ENCODE measurements at regions of chr7 and their contacts with region 1.

Region 1: DNA sequence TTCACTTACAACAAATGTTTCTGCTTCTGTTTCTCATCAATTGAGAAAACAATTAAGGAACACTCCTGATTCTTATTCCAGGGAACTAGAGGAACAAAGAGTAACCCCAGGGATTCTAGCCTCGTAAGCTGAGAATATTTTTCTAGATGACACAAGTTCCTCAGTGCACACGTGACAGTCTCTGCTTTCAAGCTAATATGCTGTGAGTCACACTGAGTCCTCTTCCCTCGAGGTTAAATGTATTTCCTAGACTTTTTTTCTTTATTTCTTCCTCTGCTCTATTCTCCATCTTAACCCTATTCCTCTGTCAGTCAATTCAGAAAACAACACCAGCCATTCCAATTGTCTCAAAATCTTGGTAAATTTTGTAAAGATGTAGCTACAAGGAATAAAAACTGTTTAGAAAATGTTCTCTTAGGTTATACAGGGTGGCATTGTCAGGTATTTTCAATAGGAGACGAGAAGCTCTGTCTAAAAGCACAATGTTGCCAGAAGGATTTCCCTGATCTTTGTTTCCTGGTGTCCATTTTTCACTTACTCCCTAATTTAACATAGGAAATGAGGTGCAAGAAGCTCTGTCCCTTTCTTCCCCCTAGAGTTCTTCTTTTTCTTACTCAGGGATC is 5.8 kb upstream of the C1GALT1 start:
- DNase-seq: no peak
- ATAC-seq: peak; percentile 69
- H3K4me3 ChIP-seq: no peak overlapping the region
- H3K4me3 Mint-ChIP-seq: peak overlapping the region in 2 of 10 donors; percentile 14 to 20
- H3K27ac ChIP-seq: no peak overlapping the region
- H3K27ac Mint-ChIP-seq: peak overlapping the region in 3 of 9 donors; percentile 8 to 72 (median 44)
- H3K4me1 ChIP-seq: peaks cover 3 to 6% of the 10 kb centered on the region in 2 donors
- H3K4me1 Mint-ChIP-seq: peaks cover 7 to 43% (median 34%) of the 10 kb centered on the region in 7 donors
- H3K27me3 ChIP-seq: no peaks in the 10 kb centered on the region
- H3K27me3 Mint-ChIP-seq: no peaks in the 10 kb centered on the region

Region 2: DNA sequence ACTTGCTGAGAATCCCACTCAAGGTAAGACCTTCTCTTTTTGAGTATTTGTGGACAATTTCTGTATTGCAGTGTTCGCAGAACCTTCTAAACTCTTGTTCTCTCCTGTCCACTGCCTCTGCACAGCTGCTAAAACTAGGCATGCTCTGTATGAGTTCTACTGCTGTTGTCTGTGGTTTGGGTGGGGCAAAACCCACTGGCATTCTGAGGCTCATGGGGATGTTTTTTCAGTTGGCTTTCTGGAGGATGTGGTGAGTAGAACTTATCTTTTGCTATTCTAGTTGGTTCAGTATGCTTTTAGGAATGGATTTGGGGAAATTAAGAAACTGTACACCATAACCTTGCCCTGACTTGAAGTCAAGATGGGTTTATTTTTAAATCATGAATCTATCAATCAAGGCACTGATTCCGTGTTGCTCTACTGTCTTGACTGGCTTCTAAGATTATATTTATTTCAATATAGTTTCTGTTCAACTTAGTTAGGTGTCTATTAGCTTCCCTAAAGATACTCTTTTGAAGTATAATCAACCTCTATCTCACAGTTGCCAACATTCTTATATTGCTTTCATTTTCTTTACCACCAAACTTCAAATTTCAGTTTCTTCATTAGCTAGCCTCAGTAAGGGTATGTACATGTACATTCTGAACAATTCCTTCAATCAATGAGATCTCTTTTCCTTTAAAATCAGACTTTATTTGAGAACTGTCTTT is 19.2 kb before region 1 on chr7:
- CTCF ChIA-PET with region 1: interaction called, 21 read pairs
- POLR2A ChIA-PET with region 1: interaction called, 109 read pairs
- intact Hi-C with region 1: loop called in 1 of 2 experiments (anchors 2 kb)
- DNase-seq: peak; percentile 16 to 89 (median 83)
- ATAC-seq: peak; percentile 97
- H3K4me3 ChIP-seq: peak overlapping the region; percentile 51
- H3K4me3 Mint-ChIP-seq: peak overlapping the region; percentile 51 to 90 (median 79)
- H3K27ac ChIP-seq: peak overlapping the region; percentile 67
- H3K27ac Mint-ChIP-seq: peak overlapping the region; percentile 81 to 99 (median 92)
- H3K4me1 ChIP-seq: peaks cover 34 to 46% of the 10 kb centered on the region in 2 donors
- H3K4me1 Mint-ChIP-seq: peaks cover 40 to 82% (median 73%) of the 10 kb centered on the region in 7 donors
- H3K27me3 ChIP-seq: no peaks in the 10 kb centered on the region
- H3K27me3 Mint-ChIP-seq: no peaks in the 10 kb centered on the region

Region 3: GRCh38 chr7:7164591-7164990 is 11.9 kb before region 1 on chr7:
- CTCF ChIA-PET with region 1: interaction called, 8 read pairs
- POLR2A ChIA-PET with region 1: interaction called, 109 read pairs
- intact Hi-C with region 1: loop called in 1 of 2 experiments (anchors 1 kb)
- DNase-seq: no peak
- ATAC-seq: no peak
- H3K4me3 ChIP-seq: no peak overlapping the region
- H3K4me3 Mint-ChIP-seq: peak overlapping the region in 5 of 10 donors; percentile 10 to 61 (median 44)
- H3K27ac ChIP-seq: no peak overlapping the region
- H3K27ac Mint-ChIP-seq: peak overlapping the region in 8 of 9 donors; percentile 3 to 71 (median 35)
- H3K4me1 ChIP-seq: peaks cover 8 to 25% of the 10 kb centered on the region in 2 donors
- H3K4me1 Mint-ChIP-seq: peaks cover 21 to 62% (median 53%) of the 10 kb centered on the region in 7 donors
- H3K27me3 ChIP-seq: no peaks in the 10 kb centered on the region
- H3K27me3 Mint-ChIP-seq: no peaks in the 10 kb centered on the region

Region 4: GRCh38 chr7:7693881-7694280 is 517.3 kb after region 1 on chr7:
- CTCF ChIA-PET with region 1: no interaction called
- POLR2A ChIA-PET with region 1: no interaction called
- intact Hi-C with region 1: no loop called
- DNase-seq: no peak
- ATAC-seq: no peak
- H3K4me3 ChIP-seq: no peak overlapping the region
- H3K4me3 Mint-ChIP-seq: no peak overlapping the region
- H3K27ac ChIP-seq: no peak overlapping the region
- H3K27ac Mint-ChIP-seq: no peak overlapping the region
- H3K4me1 ChIP-seq: peaks cover 0 to 7% of the 10 kb centered on the region in 2 donors
- H3K4me1 Mint-ChIP-seq: peaks cover 0 to 35% (median 13%) of the 10 kb centered on the region in 7 donors
- H3K27me3 ChIP-seq: no peaks in the 10 kb centered on the region
- H3K27me3 Mint-ChIP-seq: no peaks in the 10 kb centered on the region